ENCODE measurements at regions of chr1 and their contacts with region 1.

Region 1: DNA sequence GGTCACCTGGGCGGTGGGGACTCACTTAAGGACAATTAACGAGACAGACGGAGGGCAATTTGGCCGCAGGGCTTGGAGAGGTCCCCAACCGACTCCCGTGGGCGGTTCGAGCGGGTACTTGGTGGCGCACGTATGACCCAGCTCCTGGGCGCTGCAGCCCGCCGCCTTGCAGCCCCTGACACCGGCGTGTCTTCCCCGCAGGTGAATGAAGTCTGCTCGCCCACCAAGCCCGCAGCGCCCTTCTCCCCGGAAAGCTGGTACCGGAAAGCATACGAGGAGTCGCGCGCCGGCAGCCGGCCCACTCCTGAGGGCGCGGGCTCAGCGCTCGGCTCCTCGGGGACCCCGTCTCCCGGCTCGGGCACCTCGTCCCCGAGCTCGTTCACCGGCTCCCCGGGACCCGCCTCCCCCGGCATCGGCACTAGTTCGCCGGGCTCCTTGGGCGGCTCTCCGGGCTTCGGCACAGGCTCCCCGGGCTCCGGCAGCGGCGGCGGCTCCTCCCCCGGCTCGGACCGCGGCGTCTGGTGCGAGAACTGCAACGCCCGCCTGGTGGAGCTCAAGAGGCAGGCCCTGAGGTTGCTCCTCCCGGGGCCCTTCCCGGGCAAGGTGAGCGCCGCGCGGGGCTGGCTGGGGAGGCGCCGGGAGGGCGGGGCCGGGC is 1.4 kb downstream of the KIF26B start:
- DNase-seq: peak; percentile 81 to 83
- ATAC-seq: peak; percentile 83 to 93 (median 88)
- H3K4me3 ChIP-seq: peak overlapping the region; percentile 48 to 68 (median 66)
- H3K27ac ChIP-seq: peak overlapping the region in 1 of 10 donors; percentile 36
- H3K4me1 ChIP-seq: peaks cover 18 to 46% (median 37%) of the 10 kb centered on the region in 9 donors
- H3K27me3 ChIP-seq: peaks cover 0 to 89% (median 58%) of the 10 kb centered on the region in 7 donors
- CTCF ChIP-seq: peak; percentile 43 to 87 (median 77)

Region 2: GRCh38 chr1:245133995-245134720 is 22.1 kb before region 1 on chr1:
- intact Hi-C with region 1: loop called in 1 of 10 experiments (anchors 2 kb)
- DNase-seq: peak; percentile 37 to 75
- ATAC-seq: peak; percentile 80 to 93 (median 86)
- H3K4me3 ChIP-seq: no peak overlapping the region
- H3K27ac ChIP-seq: peak overlapping the region in 1 of 10 donors; percentile 58
- H3K4me1 ChIP-seq: no peaks in the 10 kb centered on the region
- H3K27me3 ChIP-seq: peaks cover 0 to 34% (median 14%) of the 10 kb centered on the region in 7 donors
- CTCF ChIP-seq: no peak

Region 3: GRCh38 chr1:245380790-245381535 is 224.8 kb after region 1 on chr1:
- intact Hi-C with region 1: loop called (anchors 2 to 5 kb)
- DNase-seq: no peak
- ATAC-seq: peak in 1 of 8 donors; percentile 24
- H3K4me3 ChIP-seq: no peak overlapping the region
- H3K27ac ChIP-seq: no peak overlapping the region
- H3K4me1 ChIP-seq: no peaks in the 10 kb centered on the region
- H3K27me3 ChIP-seq: peaks cover 0 to 10% (median 2%) of the 10 kb centered on the region in 7 donors
- CTCF ChIP-seq: peak; percentile 7 to 59 (median 44)

Region 4: GRCh38 chr1:245797592-245798348 is 641.6 kb after region 1 on chr1:
- intact Hi-C with region 1: loop called in 1 of 10 experiments (anchors 10 kb)
- DNase-seq: no peak
- ATAC-seq: no peak
- H3K4me3 ChIP-seq: no peak overlapping the region
- H3K27ac ChIP-seq: no peak overlapping the region
- H3K4me1 ChIP-seq: no peaks in the 10 kb centered on the region
- H3K27me3 ChIP-seq: no peaks in the 10 kb centered on the region
- CTCF ChIP-seq: peak in 7 of 9 donors; percentile 13 to 38 (median 25)

Region 5: GRCh38 chr1:246117066-246117791 is 961.0 kb after region 1 on chr1:
- intact Hi-C with region 1: loop called in 3 of 10 experiments (anchors 5 to 10 kb)
- DNase-seq: peak in 1 of 2 donors; percentile 21
- ATAC-seq: peak in 4 of 8 donors; percentile 59 to 73 (median 64)
- H3K4me3 ChIP-seq: no peak overlapping the region
- H3K27ac ChIP-seq: no peak overlapping the region
- H3K4me1 ChIP-seq: peaks cover 0 to 10% (median 0%) of the 10 kb centered on the region in 9 donors
- H3K27me3 ChIP-seq: no peaks in the 10 kb centered on the region
- CTCF ChIP-seq: peak in 7 of 9 donors; percentile 35 to 66 (median 57)

Region 6: GRCh38 chr1:246497331-246497915 is 1341.2 kb after region 1 on chr1:
- intact Hi-C with region 1: loop called in 7 of 10 experiments (anchors 5 to 10 kb)
- DNase-seq: no peak
- ATAC-seq: peak in 4 of 8 donors; percentile 10 to 50 (median 28)
- H3K4me3 ChIP-seq: no peak overlapping the region
- H3K27ac ChIP-seq: no peak overlapping the region
- H3K4me1 ChIP-seq: peaks cover 0 to 10% (median 5%) of the 10 kb centered on the region in 9 donors
- H3K27me3 ChIP-seq: no peaks in the 10 kb centered on the region
- CTCF ChIP-seq: peak; percentile 65 to 82 (median 73)